Common myeloid progenitor, CD34-positive (primary cell): ENCODE measurements at regions of chr11 and their contacts with region 1.

Region 1: GRCh38 chr11:131668500-131669400 is 298.3 kb downstream of the NTM start:
- DNase-seq: peak; percentile 56 to 73 (median 64)
- H3K4me3 ChIP-seq: no peak overlapping the region
- H3K27ac ChIP-seq: no peak overlapping the region
- H3K4me1 ChIP-seq: peaks cover 0 to 8% (median 0%) of the 10 kb centered on the region in 4 experiments
- H3K27me3 ChIP-seq: no peaks in the 10 kb centered on the region

Region 2: DNA sequence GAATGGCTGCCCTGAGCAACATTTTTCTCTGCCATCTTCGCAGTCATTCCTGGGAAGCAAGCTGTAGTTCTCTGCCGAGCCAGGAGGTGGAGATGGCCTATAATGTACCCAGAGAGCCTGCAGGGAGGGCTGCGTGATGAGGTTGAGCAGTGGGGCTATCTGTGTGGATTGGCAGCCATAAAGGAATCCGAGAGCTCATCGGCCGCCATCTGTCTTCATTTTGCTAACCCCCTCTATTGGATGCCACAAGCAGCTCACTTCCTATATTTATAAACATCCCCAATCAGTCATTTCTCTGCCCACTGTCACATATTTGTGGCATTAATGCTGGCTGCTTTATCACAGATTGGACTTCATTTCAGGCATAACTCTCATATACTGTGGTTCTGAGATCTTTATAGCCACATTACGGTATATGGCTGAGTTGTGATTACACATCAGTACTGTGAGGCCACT is 88.8 kb before region 1 on chr11:
- CTCF ChIA-PET with region 1: interaction called, 136 read pairs
- POLR2A ChIA-PET with region 1: no interaction called
- DNase-seq: peak; percentile 52 to 71 (median 56)
- H3K4me3 ChIP-seq: no peak overlapping the region
- H3K27ac ChIP-seq: no peak overlapping the region
- H3K4me1 ChIP-seq: no peaks in the 10 kb centered on the region
- H3K27me3 ChIP-seq: peaks cover 9 to 35% (median 12%) of the 10 kb centered on the region in 5 experiments

Region 3: GRCh38 chr11:131644204-131644795 is 24.4 kb before region 1 on chr11:
- CTCF ChIA-PET with region 1: no interaction called
- POLR2A ChIA-PET with region 1: no interaction called
- DNase-seq: peak in 1 of 3 donors; percentile 16
- H3K4me3 ChIP-seq: no peak overlapping the region
- H3K27ac ChIP-seq: no peak overlapping the region
- H3K4me1 ChIP-seq: no peaks in the 10 kb centered on the region
- H3K27me3 ChIP-seq: peaks cover 0 to 3% (median 0%) of the 10 kb centered on the region in 5 experiments

Region 4: DNA sequence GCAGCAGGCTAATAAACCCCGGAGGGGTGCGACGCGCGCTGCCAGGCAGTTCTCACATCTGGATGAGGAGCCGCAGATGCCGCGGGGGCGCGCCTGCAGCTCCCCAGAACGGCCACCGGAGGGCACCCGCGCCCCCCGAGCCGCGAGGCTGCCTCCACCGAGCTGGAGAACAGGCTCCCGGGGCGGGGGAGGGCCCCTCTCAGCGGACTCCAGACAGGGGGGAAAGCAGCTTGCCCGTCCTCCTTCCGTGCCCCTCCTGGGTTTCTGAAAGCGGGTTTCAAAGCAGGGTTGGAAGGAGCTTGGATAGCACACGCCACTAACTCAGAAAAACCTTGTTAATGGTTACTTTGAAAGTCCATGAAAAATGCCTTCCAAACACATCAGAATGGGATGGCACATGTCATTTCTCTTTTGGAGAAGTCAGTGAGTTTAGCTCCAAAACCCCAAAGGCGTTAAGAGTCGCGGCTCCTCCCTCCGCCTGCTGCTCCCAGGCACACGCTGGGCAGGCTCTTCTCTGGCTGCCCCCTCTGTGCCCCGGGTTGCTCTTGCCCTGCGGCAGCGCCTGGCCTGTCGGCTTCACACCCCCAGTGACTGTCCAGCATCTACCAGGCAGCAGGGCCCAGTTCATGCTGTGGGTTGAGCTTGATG is 19.4 kb after region 1 on chr11:
- CTCF ChIA-PET with region 1: interaction called, 15 read pairs
- POLR2A ChIA-PET with region 1: no interaction called
- DNase-seq: peak; percentile 64 to 81 (median 77)
- H3K4me3 ChIP-seq: peak overlapping the region in 1 of 7 experiments; percentile 20
- H3K27ac ChIP-seq: no peak overlapping the region
- H3K4me1 ChIP-seq: peaks cover 0 to 6% (median 2%) of the 10 kb centered on the region in 4 experiments
- H3K27me3 ChIP-seq: peaks cover 0 to 44% (median 15%) of the 10 kb centered on the region in 5 experiments